Panc1 (cell line): ENCODE measurements at regions of chr6 and their contacts with region 1.

Region 1: DNA sequence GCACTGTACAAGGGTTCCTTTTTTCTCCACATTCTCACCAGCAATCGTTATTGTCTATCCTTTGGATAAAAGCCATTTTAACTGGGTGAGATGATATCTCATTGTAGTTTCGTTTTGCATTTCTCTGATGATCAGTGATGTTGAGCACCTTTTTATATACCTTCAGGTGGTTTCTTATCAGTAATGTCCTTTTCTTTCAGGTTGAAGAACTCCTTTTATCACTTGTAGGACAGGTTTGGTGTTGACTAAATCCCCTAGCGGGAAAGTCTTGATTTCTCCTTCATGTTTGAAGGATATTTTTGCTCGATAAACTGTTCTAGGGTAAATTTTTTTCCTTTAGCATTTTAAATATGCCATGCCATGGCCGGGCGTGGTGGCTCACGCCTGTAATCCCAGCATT is 13.1 kb upstream of the ERVFRD-1 start:
- DNase-seq: no peak
- ATAC-seq: no peak
- H3K4me3 ChIP-seq: no peak overlapping the region
- H3K27ac ChIP-seq: no peak overlapping the region
- H3K4me1 ChIP-seq: peaks cover 10% of the 10 kb centered on the region
- H3K27me3 ChIP-seq: no peaks in the 10 kb centered on the region
- CTCF ChIP-seq: no peak

Region 2: DNA sequence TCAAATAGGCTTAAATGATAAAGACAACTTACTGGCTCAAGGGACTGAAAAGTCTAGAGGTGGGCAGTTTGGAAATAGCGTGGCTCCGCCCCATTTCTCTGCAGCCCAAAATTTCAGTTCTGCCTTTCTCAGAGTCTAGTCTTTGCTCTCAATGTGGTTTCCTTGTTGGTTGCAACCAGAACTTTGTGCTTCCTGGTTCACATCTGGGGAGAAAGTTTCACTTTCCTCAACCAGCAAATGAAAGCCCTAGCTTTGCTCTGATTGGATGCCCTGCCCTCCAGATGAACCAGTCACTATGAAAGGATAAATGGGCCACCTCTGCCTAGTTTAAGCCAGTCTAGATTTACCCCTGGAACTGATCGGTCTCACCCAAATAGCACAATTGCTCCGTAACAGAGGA is 222.9 kb before region 1 on chr6:
- CTCF ChIA-PET with region 1: no interaction called
- POLR2A ChIA-PET with region 1: interaction called, 10 read pairs
- in situ Hi-C with region 1: no loop called
- intact Hi-C with region 1: no loop called
- DNase-seq: no peak
- ATAC-seq: no peak
- H3K4me3 ChIP-seq: no peak overlapping the region
- H3K27ac ChIP-seq: no peak overlapping the region
- H3K4me1 ChIP-seq: no peaks in the 10 kb centered on the region
- H3K27me3 ChIP-seq: no peaks in the 10 kb centered on the region
- CTCF ChIP-seq: no peak

Region 3: DNA sequence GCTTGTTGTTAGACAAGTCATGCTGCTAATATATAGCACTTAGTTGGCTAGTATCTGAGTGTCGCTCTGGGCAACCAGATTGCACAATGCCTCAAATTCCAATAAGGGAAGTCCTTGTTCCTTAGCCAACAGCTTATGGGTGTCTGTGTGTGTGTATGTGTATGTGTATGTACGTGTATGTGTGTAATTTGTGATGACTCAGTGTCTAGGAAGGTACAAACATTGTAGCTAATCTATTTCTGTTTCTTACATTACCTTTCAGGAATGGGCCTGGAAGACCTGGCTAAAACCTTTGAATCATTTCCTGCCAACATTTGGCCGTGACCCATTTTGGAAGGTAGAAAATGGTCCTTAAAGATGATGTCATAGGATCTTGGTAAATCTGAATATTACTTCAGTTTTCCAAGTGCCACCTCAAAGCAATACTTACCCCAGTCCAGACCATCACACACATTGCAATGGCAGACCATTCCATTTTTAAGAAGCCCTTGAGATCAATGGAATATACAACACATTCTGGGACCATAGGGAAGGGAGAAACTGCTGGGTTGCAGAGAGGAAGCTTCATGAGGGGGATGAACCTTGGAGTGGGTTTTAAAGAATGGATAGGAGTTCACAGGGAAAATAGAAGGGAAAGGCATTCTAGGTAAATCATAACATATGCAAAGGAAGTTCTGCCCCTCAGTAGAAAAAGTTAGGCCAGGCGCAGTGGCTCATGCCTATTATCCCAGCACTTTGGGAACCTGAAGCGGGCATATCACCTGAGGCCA is 82.8 kb after region 1 on chr6:
- CTCF ChIA-PET with region 1: no interaction called
- POLR2A ChIA-PET with region 1: no interaction called
- in situ Hi-C with region 1: no loop called
- intact Hi-C with region 1: no loop called
- DNase-seq: peak; percentile 87
- ATAC-seq: peak; percentile 49; the same call in 1 of the 2 replicates
- H3K4me3 ChIP-seq: no peak overlapping the region
- H3K27ac ChIP-seq: no peak overlapping the region
- H3K4me1 ChIP-seq: no peaks in the 10 kb centered on the region
- H3K27me3 ChIP-seq: no peaks in the 10 kb centered on the region
- CTCF ChIP-seq: no peak

Region 4: DNA sequence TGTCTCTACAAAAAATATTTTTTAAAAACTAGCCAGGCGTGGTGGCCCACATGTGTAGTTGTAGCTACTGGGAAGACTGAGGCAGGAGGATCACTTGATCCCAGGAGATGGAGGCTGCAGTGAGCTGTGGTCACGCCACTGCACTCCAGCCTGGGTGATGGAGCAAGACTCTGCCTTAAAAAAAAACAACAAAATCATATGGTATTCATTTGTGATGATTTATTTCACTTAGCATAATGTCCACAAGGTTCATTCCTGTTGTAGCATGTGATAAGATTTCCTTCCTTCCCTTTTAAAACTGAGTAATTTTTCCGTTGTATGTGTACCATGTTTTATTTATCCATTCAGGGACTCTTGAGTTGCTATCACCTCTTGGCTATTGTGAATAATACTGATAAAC is 439.2 kb after region 1 on chr6:
- CTCF ChIA-PET with region 1: no interaction called
- POLR2A ChIA-PET with region 1: no interaction called
- in situ Hi-C with region 1: no loop called
- intact Hi-C with region 1: no loop called
- DNase-seq: no peak
- ATAC-seq: no peak
- H3K4me3 ChIP-seq: no peak overlapping the region
- H3K27ac ChIP-seq: no peak overlapping the region
- H3K4me1 ChIP-seq: no peaks in the 10 kb centered on the region
- H3K27me3 ChIP-seq: peaks cover 4% of the 10 kb centered on the region; the same call in 1 of the 2 replicates
- CTCF ChIP-seq: no peak